ENCODE measurements at regions of chr10 and their contacts with region 1.

Region 1: GRCh38 chr10:87771871-87772500 is 46.0 kb downstream of the ATAD1 start:
- DNase-seq: peak; percentile 10
- H3K4me3 ChIP-seq: no peak overlapping the region
- H3K27ac ChIP-seq: no peak overlapping the region
- H3K4me1 ChIP-seq: peaks cover 0 to 14% of the 10 kb centered on the region in 2 experiments; a peak in 1 of 4 replicates
- H3K27me3 ChIP-seq: no peaks in the 10 kb centered on the region
- CTCF ChIP-seq: peak; percentile 67
- EP300 ChIP-seq: no peak
- RAD21 ChIP-seq: peak; percentile 73

Region 2: GRCh38 chr10:87659571-87660483 is 112.2 kb before region 1 on chr10 and contains the start of gene PAPSS2:
- CTCF ChIA-PET with region 1: interaction called, 10 read pairs
- POLR2A ChIA-PET with region 1: interaction called, 3 read pairs
- DNase-seq: peak; percentile 83
- H3K4me3 ChIP-seq: peak within 1 kb of the TSS; percentile 86 to 95
- H3K27ac ChIP-seq: peak within 1 kb of the TSS in 1 of 2 experiments; percentile 82; a peak in 3 of 4 replicates
- H3K4me1 ChIP-seq: peaks cover 4 to 10% of the 10 kb centered on the region in 2 experiments; a peak in 3 of 4 replicates
- H3K27me3 ChIP-seq: no peaks in the 10 kb centered on the region
- CTCF ChIP-seq: peak; percentile 38; the same call in 1 of the 2 replicates
- EP300 ChIP-seq: peak in 1 of 2 experiments; percentile 42; a peak in 1 of 4 replicates
- RAD21 ChIP-seq: no peak
- polyA plus RNA-seq, gene PAPSS2: 50.0 and 55.0 TPM in 2 replicates

Region 3: GRCh38 chr10:87782721-87783120 is 10.7 kb after region 1 on chr10:
- CTCF ChIA-PET with region 1: interaction called, 10 read pairs
- POLR2A ChIA-PET with region 1: no interaction called
- DNase-seq: no peak
- H3K4me3 ChIP-seq: no peak overlapping the region
- H3K27ac ChIP-seq: no peak overlapping the region
- H3K4me1 ChIP-seq: no peaks in the 10 kb centered on the region
- H3K27me3 ChIP-seq: no peaks in the 10 kb centered on the region
- CTCF ChIP-seq: no peak
- EP300 ChIP-seq: no peak
- RAD21 ChIP-seq: no peak